ENCODE measurements at regions of chr7 and their contacts with region 1.

Region 1: GRCh38 chr7:130069978-130070860 is at the start of gene KLHDC10:
- ATAC-seq: peak; percentile 95 to 98 (median 96)
- H3K4me3 ChIP-seq: peak within 1 kb of the TSS; percentile 73 to 83 (median 80)
- H3K27ac ChIP-seq: peak within 1 kb of the TSS; percentile 88 to 95
- H3K4me1 ChIP-seq: peaks cover 5 to 11% of the 10 kb centered on the region in 2 donors
- total RNA-seq, gene KLHDC10: 22.8 to 61.0 (median 40.5) TPM

Region 2: DNA sequence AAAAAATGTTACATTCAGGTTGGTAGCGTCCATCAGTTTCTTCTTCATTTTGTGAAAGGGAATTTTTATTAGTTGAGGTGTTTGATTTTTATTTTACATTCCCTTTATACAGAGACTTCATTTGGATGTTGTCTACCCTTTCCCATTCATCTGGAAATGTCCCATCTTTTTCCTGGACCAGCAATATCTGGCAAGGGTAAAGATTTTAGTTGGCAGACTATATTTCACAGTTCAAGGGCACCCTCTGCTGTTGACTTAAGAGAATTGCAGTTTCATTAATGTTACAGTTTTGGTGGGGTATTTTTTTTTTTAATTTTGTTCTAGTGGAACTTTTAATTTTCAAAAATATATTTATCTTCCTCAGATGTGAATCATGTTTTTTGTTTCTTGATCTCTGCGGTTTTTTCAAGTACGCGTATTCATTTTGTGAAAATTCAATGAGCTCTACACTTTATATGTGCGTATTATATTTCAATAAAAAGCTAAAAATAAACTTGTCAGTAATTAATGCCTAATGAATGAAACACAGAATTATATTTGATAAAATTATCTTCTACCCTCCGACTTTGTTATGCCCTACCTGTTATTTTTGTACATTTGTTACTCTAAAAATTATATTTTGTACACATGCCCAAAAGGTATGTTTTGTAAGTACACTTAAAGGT is 761.7 kb after region 1 on chr7:
- in situ Hi-C with region 1: loop called in 1 of 9 experiments (anchors 25 kb)
- ATAC-seq: no peak
- H3K4me3 ChIP-seq: no peak overlapping the region
- H3K27ac ChIP-seq: no peak overlapping the region
- H3K4me1 ChIP-seq: no peaks in the 10 kb centered on the region

Measured in motor neuron (in vitro differentiated cells).